ENCODE measurements at regions of chr4 and their contacts with region 1.

Region 1: GRCh38 chr4:85642356-85643100 is 167.6 kb downstream of the ARHGAP24 start:
- DNase-seq: no peak
- H3K4me3 ChIP-seq: no peak overlapping the region
- H3K27ac ChIP-seq: no peak overlapping the region
- H3K4me1 ChIP-seq: no peaks in the 10 kb centered on the region
- H3K27me3 ChIP-seq: no peaks in the 10 kb centered on the region
- CTCF ChIP-seq: no peak
- POLR2A ChIP-seq: no peak

Region 2: GRCh38 chr4:85938062-85938461 is 295.5 kb after region 1 on chr4:
- intact Hi-C with region 1: loop called (anchors 5 kb)
- DNase-seq: no peak
- H3K4me3 ChIP-seq: no peak overlapping the region
- H3K27ac ChIP-seq: no peak overlapping the region
- H3K4me1 ChIP-seq: no peaks in the 10 kb centered on the region
- H3K27me3 ChIP-seq: no peaks in the 10 kb centered on the region
- CTCF ChIP-seq: no peak
- POLR2A ChIP-seq: no peak

Measured in breast epithelium (tissue), 4 donors.